Aorta (tissue), 5 donors: ENCODE measurements at regions of chr21 and their contacts with region 1.

Region 1: GRCh38 chr21:31198575-31198974 is 145.5 kb downstream of the TIAM1 start:
- DNase-seq: no peak
- ATAC-seq: peak; percentile 56
- H3K4me3 ChIP-seq: no peak overlapping the region
- H3K27ac ChIP-seq: no peak overlapping the region
- H3K4me1 ChIP-seq: no peaks in the 10 kb centered on the region
- H3K27me3 ChIP-seq: no peaks in the 10 kb centered on the region

Region 2: DNA sequence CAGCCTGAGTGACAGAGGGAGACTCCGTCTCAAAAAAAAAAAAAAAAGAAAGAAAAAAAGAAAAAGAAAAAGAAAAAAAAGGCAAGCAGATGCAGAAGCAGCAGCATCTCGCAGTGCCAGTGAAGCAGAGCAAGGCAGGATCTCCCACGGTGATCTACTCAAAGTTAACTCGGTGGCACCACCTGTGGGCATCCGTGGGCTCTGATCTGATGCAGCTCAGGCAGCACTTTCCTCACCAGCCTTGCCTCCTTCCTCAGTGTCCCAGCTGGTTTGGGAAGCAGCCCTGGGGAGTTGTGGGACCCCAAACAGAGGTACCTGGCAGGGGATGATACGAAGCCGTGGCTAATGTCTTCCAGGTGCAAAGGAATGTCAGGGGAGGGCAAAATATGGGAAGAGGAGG is 56.0 kb before region 1 on chr21:
- intact Hi-C with region 1: loop called in 1 of 2 experiments (anchors 10 kb)
- DNase-seq: no peak
- ATAC-seq: no peak
- H3K4me3 ChIP-seq: no peak overlapping the region
- H3K27ac ChIP-seq: no peak overlapping the region
- H3K4me1 ChIP-seq: no peaks in the 10 kb centered on the region
- H3K27me3 ChIP-seq: no peaks in the 10 kb centered on the region

Region 3: DNA sequence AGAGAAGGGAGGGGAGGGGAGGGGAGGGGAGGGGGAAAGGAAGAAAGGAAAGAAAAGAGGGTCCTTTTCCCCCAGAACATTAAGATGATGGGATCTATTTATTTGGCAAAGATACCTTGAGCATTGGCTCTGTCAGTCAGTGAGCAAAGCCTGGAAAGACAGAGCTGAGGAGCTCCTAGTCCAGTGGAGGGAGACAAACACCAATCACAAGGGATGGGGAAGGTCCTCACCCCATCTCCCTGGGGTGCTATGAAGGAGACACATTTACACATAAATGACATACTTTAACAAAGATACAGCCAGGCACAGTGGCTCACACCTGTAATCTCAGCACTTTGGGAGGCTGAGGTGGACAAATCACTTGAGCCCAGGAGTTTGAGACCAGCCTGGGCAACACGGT is 300.4 kb after region 1 on chr21:
- intact Hi-C with region 1: no loop called
- DNase-seq: no peak
- ATAC-seq: no peak
- H3K4me3 ChIP-seq: no peak overlapping the region
- H3K27ac ChIP-seq: no peak overlapping the region
- H3K4me1 ChIP-seq: no peaks in the 10 kb centered on the region
- H3K27me3 ChIP-seq: no peaks in the 10 kb centered on the region

Region 4: DNA sequence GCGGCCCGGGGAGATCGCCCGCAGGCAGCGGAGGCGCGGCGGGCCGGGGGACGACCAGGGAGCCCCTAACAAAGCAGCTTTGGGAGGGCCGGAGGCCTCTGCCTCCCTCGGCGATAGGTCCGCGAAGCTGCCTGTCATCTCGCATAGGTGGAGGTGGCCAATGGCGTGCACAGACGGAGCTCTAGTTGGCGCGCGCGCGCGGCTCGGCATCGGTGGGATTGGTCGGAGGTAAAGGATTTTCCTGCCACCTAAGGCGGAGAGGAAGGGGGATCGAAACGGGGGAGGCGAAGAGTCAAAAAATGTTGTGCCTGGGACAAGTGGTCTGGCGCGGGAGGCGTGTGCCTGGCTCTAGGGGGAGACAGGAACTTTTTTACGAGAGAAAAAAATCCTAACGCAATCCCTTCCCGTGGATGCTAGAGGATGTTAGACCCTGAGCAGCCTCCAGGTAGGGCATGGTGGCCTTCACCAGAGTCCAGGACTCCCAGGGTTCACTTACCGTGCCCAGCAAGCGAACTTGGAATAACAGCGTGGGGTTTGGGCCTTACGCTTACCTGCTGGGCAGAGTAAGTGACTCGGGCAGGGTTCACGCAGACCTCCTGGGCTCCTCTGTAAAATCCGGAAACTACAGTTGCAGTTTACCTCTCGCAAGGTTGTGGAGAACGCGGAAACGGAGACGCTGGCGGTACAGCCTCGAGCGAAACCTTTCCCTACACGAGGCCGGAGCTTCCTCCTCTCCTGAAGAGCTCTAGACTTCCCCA is 361.0 kb after region 1 on chr21:
- intact Hi-C with region 1: loop called in 1 of 2 experiments (anchors 10 kb)
- DNase-seq: peak; percentile 87 to 93
- ATAC-seq: peak; percentile 78
- H3K4me3 ChIP-seq: peak overlapping the region in 1 of 2 donors; percentile 33
- H3K27ac ChIP-seq: no peak overlapping the region
- H3K4me1 ChIP-seq: no peaks in the 10 kb centered on the region
- H3K27me3 ChIP-seq: no peaks in the 10 kb centered on the region

Region 5: GRCh38 chr21:31580866-31581276 is 382.3 kb after region 1 on chr21:
- intact Hi-C with region 1: loop called in 1 of 2 experiments (anchors 2 kb)
- DNase-seq: peak; percentile 73 to 85
- ATAC-seq: peak; percentile 83
- H3K4me3 ChIP-seq: no peak overlapping the region
- H3K27ac ChIP-seq: no peak overlapping the region
- H3K4me1 ChIP-seq: no peaks in the 10 kb centered on the region
- H3K27me3 ChIP-seq: no peaks in the 10 kb centered on the region

Region 6: GRCh38 chr21:31604591-31605190 is 406.1 kb after region 1 on chr21:
- intact Hi-C with region 1: loop called (anchors 5 to 10 kb)
- DNase-seq: peak; percentile 60 to 88
- ATAC-seq: peak; percentile 73
- H3K4me3 ChIP-seq: no peak overlapping the region
- H3K27ac ChIP-seq: no peak overlapping the region
- H3K4me1 ChIP-seq: no peaks in the 10 kb centered on the region
- H3K27me3 ChIP-seq: no peaks in the 10 kb centered on the region